Left lung (tissue), 14 donors: ENCODE measurements at regions of chr13 and their contacts with region 1.

Region 1: DNA sequence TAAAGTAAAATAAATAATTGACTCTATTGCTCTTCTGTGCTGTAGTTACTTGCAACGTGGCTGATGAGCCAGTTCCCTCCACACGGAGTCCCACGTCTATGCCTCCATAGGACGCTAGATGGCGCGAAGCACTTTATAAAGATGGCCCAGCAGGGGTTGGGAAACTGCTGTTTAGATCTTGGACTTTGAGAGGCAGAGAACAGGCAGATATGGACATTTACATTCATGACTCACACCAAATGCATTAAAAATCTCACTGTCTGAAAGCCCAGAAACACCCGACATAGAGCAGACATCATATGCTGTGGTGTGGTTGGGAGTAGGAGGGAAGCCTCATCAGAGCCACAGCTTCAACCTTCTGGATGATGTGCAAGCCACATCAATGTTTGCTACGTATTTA is 643.1 kb upstream of the ARGLU1 start:
- DNase-seq: peak in 3 of 4 donors; percentile 65 to 89 (median 82)
- ATAC-seq: peak; percentile 99
- H3K4me3 ChIP-seq: no peak overlapping the region
- H3K27ac ChIP-seq: no peak overlapping the region
- H3K4me1 ChIP-seq: peaks cover 7 to 8% of the 10 kb centered on the region in 2 donors
- H3K27me3 ChIP-seq: no peaks in the 10 kb centered on the region
- CTCF ChIP-seq: peak; percentile 83 to 92

Region 2: DNA sequence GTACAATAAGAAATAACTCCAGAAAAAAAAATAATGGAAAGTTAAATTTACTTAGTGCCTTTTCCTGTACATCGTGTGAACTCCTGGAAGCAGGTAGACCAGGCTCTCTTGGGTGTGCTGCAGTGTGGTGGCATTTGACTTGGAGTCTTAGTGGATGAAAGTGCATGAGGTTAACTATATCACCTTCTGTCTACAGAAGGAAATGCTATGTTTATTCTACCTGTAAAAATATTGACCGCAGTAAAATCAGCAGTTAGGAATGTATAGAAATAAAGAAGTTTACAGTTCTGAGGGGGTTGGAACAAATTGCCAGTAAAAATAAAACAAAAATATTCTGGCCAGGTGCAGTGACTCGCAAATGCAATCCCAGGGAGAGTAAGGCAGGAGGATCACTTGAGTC is 282.2 kb after region 1 on chr13:
- intact Hi-C with region 1: no loop called
- DNase-seq: no peak
- ATAC-seq: no peak
- H3K4me3 ChIP-seq: no peak overlapping the region
- H3K27ac ChIP-seq: no peak overlapping the region
- H3K4me1 ChIP-seq: no peaks in the 10 kb centered on the region
- H3K27me3 ChIP-seq: no peaks in the 10 kb centered on the region
- CTCF ChIP-seq: no peak

Region 3: DNA sequence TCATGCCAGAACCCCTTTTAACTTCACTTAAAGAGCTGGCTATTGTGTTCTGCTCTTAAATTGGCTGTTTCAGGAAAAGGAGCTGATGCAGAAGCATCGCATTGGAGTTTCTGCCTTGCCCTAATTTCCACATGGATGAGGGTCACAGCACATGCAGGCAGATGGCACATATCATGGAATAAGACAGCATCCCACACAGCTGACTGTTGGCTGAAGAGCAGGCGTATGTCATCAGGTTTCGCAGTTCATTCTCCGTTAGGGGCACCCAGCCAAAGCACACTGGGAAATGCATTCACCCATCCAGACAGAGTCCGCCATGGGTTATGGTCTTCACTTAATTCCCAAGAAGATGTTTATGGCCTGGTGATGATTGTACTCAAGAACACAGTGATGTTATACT is 431.8 kb after region 1 on chr13:
- intact Hi-C with region 1: loop called in 1 of 2 experiments (anchors 10 kb)
- DNase-seq: peak in 2 of 4 donors; percentile 95
- ATAC-seq: no peak
- H3K4me3 ChIP-seq: no peak overlapping the region
- H3K27ac ChIP-seq: no peak overlapping the region
- H3K4me1 ChIP-seq: no peaks in the 10 kb centered on the region
- H3K27me3 ChIP-seq: no peaks in the 10 kb centered on the region
- CTCF ChIP-seq: no peak

Region 4: GRCh38 chr13:107650081-107650701 is 439.1 kb after region 1 on chr13:
- intact Hi-C with region 1: loop called (anchors 10 kb)
- DNase-seq: peak; percentile 20 to 73 (median 42)
- ATAC-seq: peak; percentile 85
- H3K4me3 ChIP-seq: no peak overlapping the region
- H3K27ac ChIP-seq: no peak overlapping the region
- H3K4me1 ChIP-seq: no peaks in the 10 kb centered on the region
- H3K27me3 ChIP-seq: no peaks in the 10 kb centered on the region
- CTCF ChIP-seq: peak; percentile 55 to 85